ENCODE measurements at regions of chr15 and their contacts with region 1.

Region 1: GRCh38 chr15:40274350-40275274 is 8.3 kb downstream of the ANKRD63 start:
- DNase-seq: peak; percentile 78 to 94 (median 86)
- ATAC-seq: peak; percentile 89
- H3K4me3 ChIP-seq: no peak overlapping the region
- H3K4me3 Mint-ChIP-seq: no peak overlapping the region
- H3K27ac ChIP-seq: no peak overlapping the region
- H3K27ac Mint-ChIP-seq: no peak overlapping the region
- H3K4me1 ChIP-seq: peaks cover 12% of the 10 kb centered on the region
- H3K4me1 Mint-ChIP-seq: peaks cover 12% of the 10 kb centered on the region
- H3K27me3 ChIP-seq: peaks cover 18 to 19% of the 10 kb centered on the region in 2 experiments
- H3K27me3 Mint-ChIP-seq: peaks cover 23% of the 10 kb centered on the region
- CTCF ChIP-seq: peak; percentile 100

Region 2: DNA sequence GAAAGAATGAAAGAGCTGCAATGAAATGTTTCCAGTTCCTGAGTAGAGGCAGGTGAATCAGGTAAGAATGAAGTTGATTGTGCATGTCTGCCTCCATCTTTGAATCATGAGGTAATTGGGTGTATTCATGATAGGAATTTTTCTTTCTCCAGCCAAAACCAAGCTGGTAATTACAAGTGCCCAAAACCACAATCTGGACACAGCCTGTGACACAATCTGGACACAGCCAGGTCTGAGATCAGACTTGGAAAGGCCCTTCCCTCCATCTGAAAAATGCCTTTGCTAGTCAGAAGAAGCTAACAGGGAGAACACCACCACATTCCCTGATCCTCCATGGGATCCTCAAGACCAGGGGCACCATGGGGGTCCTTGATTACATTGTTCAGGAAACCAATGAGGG is 1032.3 kb before region 1 on chr15:
- CTCF ChIA-PET with region 1: no interaction called
- POLR2A ChIA-PET with region 1: no interaction called
- intact Hi-C with region 1: no loop called
- DNase-seq: no peak
- ATAC-seq: no peak
- H3K4me3 ChIP-seq: no peak overlapping the region
- H3K4me3 Mint-ChIP-seq: no peak overlapping the region
- H3K27ac ChIP-seq: no peak overlapping the region
- H3K27ac Mint-ChIP-seq: no peak overlapping the region
- H3K4me1 ChIP-seq: no peaks in the 10 kb centered on the region
- H3K4me1 Mint-ChIP-seq: no peaks in the 10 kb centered on the region
- H3K27me3 ChIP-seq: no peaks in the 10 kb centered on the region
- H3K27me3 Mint-ChIP-seq: peaks cover 10% of the 10 kb centered on the region
- CTCF ChIP-seq: no peak

Region 3: DNA sequence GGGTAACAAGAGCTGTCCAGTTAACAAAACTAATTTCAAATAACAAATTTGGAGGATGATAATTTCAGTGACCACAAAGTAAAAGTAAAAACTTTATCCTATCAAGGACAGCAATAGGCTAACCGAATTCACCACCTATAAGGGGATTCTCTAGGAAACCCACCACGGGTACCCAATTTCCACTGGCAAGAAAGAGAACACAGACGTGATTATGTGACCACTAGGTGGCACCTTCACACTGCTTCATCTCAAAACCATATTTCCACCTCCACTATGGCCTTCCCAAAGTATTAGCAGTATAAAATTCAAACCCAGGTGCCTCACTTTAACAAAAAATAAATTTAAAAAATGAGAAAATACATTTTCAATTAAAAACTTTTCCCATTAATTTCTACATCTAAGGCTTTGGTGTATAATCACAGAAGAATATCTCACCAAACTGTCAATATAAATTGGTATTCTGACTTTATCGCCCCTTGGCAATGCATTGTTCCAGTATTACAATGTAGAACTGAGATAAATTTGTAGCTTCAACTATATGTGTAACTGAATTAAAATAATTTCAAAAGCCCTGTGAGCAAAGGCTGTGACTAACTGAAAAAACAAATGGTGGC is 588.5 kb before region 1 on chr15:
- CTCF ChIA-PET with region 1: no interaction called
- POLR2A ChIA-PET with region 1: no interaction called
- intact Hi-C with region 1: loop called (anchors 2 to 5 kb)
- DNase-seq: peak in 9 of 14 experiments; percentile 3 to 70 (median 12)
- ATAC-seq: no peak
- H3K4me3 ChIP-seq: no peak overlapping the region
- H3K4me3 Mint-ChIP-seq: no peak overlapping the region
- H3K27ac ChIP-seq: no peak overlapping the region
- H3K27ac Mint-ChIP-seq: no peak overlapping the region
- H3K4me1 ChIP-seq: no peaks in the 10 kb centered on the region
- H3K4me1 Mint-ChIP-seq: no peaks in the 10 kb centered on the region
- H3K27me3 ChIP-seq: no peaks in the 10 kb centered on the region
- H3K27me3 Mint-ChIP-seq: no peaks in the 10 kb centered on the region
- CTCF ChIP-seq: peak; percentile 94

Region 4: GRCh38 chr15:40038638-40039543 is 235.7 kb before region 1 on chr15 and contains the start of gene SRP14:
- CTCF ChIA-PET with region 1: interaction called, 46 read pairs
- POLR2A ChIA-PET with region 1: no interaction called
- intact Hi-C with region 1: loop called in 1 of 2 experiments (anchors 1 kb)
- DNase-seq: peak; percentile 85 to 96 (median 90)
- ATAC-seq: peak; percentile 92
- H3K4me3 ChIP-seq: peak within 1 kb of the TSS; percentile 95
- H3K4me3 Mint-ChIP-seq: peak within 1 kb of the TSS; percentile 100
- H3K27ac ChIP-seq: peak within 1 kb of the TSS; percentile 88 to 90
- H3K27ac Mint-ChIP-seq: peak within 1 kb of the TSS; percentile 97
- H3K4me1 ChIP-seq: peaks cover 20% of the 10 kb centered on the region
- H3K4me1 Mint-ChIP-seq: peaks cover 49% of the 10 kb centered on the region
- H3K27me3 ChIP-seq: no peaks in the 10 kb centered on the region
- H3K27me3 Mint-ChIP-seq: no peaks in the 10 kb centered on the region
- CTCF ChIP-seq: no peak
- total RNA-seq, gene SRP14: 120 to 126 TPM

Region 5: DNA sequence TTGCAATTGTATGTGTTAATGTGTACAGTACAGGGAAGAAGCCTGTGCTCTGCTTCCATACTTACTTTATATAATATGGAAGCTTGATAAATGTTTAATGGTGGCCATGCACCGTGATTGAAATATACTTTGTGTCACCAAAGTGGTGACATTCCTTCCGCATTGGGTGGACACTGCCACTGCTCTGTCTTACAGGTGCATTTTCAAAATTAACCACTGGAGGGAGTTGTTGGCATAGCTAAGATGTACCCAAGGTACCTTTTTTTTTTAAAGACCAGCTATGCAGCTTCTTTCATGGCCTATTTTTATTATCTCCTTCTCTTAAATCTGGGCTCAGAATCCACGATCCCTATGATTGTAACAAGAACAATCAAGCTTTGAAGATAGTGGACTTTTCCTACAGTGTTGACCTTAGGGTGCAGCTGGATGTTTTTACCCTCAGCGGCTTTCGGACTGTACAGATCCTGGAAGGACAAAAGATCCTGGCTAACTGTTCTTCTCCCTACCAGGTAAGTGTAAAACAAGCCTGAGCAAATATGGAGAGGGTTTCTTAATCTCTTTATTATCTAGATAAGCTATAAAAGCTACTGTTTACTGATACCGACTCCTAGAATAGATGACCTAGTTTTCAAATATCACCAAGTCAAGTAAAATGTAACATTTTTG is 57.3 kb before region 1 on chr15:
- CTCF ChIA-PET with region 1: interaction called, 27 read pairs
- POLR2A ChIA-PET with region 1: interaction called, 6 read pairs
- intact Hi-C with region 1: loop called (anchors 1 kb)
- DNase-seq: peak in 11 of 14 experiments; percentile 9 to 85 (median 31)
- ATAC-seq: peak; percentile 99
- H3K4me3 ChIP-seq: no peak overlapping the region
- H3K4me3 Mint-ChIP-seq: no peak overlapping the region
- H3K27ac ChIP-seq: no peak overlapping the region
- H3K27ac Mint-ChIP-seq: no peak overlapping the region
- H3K4me1 ChIP-seq: no peaks in the 10 kb centered on the region
- H3K4me1 Mint-ChIP-seq: no peaks in the 10 kb centered on the region
- H3K27me3 ChIP-seq: no peaks in the 10 kb centered on the region
- H3K27me3 Mint-ChIP-seq: no peaks in the 10 kb centered on the region
- CTCF ChIP-seq: peak; percentile 90

Region 6: DNA sequence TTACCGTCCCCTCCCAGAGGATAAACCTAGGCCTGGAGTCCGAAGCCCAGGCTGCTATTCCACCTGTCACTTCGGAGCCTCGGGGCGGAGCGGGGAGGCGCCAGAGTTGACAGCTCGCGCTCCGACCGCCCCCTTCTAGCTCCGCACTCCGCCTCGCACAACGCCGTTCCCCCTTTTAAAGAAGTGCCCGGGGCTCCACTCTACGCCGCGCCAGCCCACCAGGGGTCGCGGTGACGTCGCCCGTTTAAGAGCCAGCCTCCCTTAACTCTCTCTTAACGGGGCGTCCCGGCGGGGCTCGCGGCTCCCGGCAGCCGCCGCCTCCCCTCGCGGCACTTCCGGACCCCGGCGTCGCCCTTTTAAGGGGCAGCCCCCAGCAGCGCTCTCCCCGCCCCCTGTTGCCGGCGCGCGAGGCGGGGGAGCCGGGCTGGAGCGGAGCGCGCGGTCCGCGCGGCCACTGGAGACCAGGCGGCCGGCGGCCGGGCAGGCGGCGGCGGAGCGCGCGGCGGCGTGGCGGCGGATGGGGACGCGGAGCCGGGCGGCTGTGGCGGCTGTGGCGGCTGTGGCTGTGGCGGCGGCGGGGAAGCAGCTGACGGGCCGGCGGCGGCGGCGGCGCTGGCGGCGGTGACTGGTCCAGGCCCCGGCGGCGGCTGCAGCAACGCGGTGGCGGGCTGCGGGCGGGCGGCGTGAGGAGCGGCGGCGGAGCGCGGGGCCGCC is 48.8 kb after region 1 on chr15 and contains the start of gene INAFM2:
- CTCF ChIA-PET with region 1: interaction called, 10 read pairs
- POLR2A ChIA-PET with region 1: interaction called, 3 read pairs
- intact Hi-C with region 1: no loop called
- DNase-seq: peak; percentile 75 to 96 (median 87)
- ATAC-seq: peak; percentile 84
- H3K4me3 ChIP-seq: peak within 1 kb of the TSS; percentile 55
- H3K4me3 Mint-ChIP-seq: peak within 1 kb of the TSS; percentile 92
- H3K27ac ChIP-seq: peak within 1 kb of the TSS; percentile 10 to 41
- H3K27ac Mint-ChIP-seq: peak within 1 kb of the TSS; percentile 79
- H3K4me1 ChIP-seq: peaks cover 32% of the 10 kb centered on the region
- H3K4me1 Mint-ChIP-seq: peaks cover 36% of the 10 kb centered on the region
- H3K27me3 ChIP-seq: no peaks in the 10 kb centered on the region
- H3K27me3 Mint-ChIP-seq: no peaks in the 10 kb centered on the region
- CTCF ChIP-seq: peak; percentile 59
- total RNA-seq, gene INAFM2: 6.8 to 7.0 TPM

Region 7: DNA sequence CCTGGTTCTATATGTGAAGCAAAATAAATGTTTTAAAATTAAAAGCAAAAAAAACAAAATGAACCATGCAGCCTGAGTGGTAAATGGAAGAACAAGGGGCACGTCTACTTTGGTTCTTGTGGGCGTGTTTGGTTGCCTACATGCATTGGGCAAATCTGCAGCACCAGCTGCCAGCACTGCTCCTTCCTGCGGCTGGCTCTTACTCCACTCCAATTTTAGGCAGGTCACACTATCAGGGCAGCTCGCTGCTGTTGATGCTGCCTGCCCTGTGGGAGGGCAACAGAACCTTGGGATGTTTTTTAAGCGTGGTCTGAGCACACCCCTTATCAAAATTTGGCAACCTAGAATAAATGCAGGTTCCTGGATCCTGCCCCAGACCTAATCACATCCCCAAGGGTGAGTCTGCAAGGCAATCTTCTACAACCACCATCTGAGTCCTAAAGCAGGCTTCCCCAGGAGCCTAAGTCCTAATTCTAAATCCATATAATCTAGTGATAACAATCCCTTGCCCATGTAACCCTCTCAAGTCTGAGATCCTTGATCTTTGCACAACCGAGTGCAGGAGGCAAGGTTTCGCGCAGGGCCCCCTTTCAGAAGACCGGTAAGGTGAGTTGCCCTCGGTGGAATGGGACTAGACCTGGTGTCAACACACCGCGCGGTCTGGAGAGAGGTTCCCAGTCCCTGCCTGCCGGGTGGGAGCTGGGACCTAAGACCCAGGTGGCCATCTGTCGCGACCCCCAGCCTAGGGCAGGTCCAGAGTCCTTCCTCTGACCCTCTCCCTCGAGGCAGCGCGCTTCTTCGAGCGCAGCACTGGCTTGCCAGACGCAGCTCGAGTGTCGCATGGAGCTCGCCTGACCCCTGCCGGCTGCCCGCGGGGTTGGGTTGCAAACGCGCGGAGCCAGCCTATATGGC is 146.9 kb after region 1 on chr15:
- CTCF ChIA-PET with region 1: interaction called, 13 read pairs
- POLR2A ChIA-PET with region 1: no interaction called
- intact Hi-C with region 1: loop called in 1 of 2 experiments (anchors 1 kb)
- DNase-seq: peak; percentile 60 to 87 (median 79)
- ATAC-seq: peak; percentile 98
- H3K4me3 ChIP-seq: no peak overlapping the region
- H3K4me3 Mint-ChIP-seq: no peak overlapping the region
- H3K27ac ChIP-seq: no peak overlapping the region
- H3K27ac Mint-ChIP-seq: no peak overlapping the region
- H3K4me1 ChIP-seq: peaks cover 7% of the 10 kb centered on the region
- H3K4me1 Mint-ChIP-seq: peaks cover 7% of the 10 kb centered on the region
- H3K27me3 ChIP-seq: no peaks in the 10 kb centered on the region
- H3K27me3 Mint-ChIP-seq: no peaks in the 10 kb centered on the region
- CTCF ChIP-seq: peak; percentile 96

Measured in CD4-positive, alpha-beta T cell (primary cell).